ENCODE measurements at regions of chr9 and their contacts with region 1.

Region 1: DNA sequence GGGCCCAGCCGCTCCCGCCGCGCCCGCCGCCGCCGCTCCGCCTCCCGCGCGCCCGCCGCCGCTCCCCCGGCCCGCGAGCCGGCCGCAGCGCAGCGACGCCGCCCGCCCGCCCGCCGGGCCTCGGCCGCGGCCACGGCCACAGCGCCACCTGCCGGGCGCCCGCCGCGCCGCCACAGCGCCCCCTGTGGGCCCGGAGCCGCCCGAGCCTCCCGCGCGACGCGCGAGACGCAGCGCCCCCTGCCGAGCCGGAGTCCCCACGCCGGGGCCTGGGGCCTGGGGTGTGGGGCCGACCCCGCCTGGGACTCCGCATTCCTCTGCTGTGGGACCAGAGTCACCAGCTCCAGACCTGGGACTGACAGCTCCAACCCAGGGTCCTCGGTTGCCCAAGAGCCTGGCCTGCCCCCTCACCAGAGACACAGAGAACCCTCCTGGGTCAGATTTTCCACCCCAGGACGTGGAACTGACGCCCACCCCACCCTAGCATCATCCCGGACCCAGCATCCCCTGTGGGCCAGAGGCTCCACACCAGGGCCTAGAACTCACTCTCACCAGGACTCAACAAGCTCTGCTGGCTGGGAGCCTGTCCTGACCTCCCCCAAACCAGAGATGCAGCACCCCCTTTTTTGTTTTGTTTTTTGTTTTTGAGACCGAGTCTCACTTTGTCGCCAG is at the start of gene RAPGEF1:
- DNase-seq: peak; percentile 90
- ATAC-seq: peak; percentile 93
- H3K4me3 ChIP-seq: peak within 1 kb of the TSS; percentile 70
- H3K27ac ChIP-seq: peak within 1 kb of the TSS; percentile 87
- H3K4me1 ChIP-seq: peaks cover 45% of the 10 kb centered on the region
- H3K27me3 ChIP-seq: no peaks in the 10 kb centered on the region
- CTCF ChIP-seq: peak; percentile 72
- total RNA-seq, gene RAPGEF1: 144 TPM

Region 2: DNA sequence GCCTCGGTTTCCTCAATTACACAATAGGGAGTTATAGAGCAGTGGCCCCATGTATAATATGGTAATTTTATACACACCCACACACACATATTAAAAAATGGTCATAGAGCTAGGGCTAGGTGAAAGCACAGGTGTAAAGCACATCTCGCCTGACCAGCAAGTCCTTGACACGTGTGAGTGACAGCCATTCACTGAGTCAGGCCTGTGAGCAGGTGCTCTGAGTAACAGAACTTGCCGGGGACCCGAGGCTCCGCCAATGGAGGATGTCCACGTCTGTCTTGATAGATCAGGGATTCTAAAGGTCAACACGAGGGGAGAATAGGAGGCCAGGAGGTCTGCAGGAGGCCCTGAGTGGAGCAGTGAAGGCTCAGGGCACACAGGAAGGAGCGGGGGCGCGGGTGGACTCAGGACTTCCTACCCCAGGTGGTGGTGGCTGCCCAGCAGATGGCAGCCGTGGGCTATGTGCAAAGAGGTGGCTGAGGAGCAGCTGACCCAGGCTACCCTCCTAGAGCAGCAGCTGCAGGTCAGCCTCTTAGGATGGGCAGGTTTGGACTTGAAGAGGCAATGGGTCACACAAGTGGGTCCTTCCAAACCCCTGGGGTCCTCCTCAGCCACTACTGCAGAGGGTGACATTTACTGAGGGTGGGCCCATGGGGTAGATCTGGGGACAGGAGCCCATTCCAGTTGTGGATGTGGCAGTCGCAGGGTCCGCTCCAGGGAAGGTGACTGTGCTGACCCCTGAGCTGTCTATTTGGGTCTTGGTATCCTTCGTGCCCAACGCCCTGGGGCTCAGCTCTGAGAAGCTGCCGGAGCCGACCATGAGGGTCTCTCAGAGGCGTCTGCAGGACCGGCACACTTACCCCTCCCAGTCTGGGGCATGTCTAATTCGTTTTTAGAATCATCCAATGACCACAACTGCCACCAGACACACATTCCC is 148.9 kb before region 1 on chr9:
- intact Hi-C with region 1: loop called (anchors 5 kb)
- DNase-seq: peak; percentile 92
- ATAC-seq: peak; percentile 93
- H3K4me3 ChIP-seq: no peak overlapping the region
- H3K27ac ChIP-seq: no peak overlapping the region
- H3K4me1 ChIP-seq: peaks cover 3% of the 10 kb centered on the region
- H3K27me3 ChIP-seq: no peaks in the 10 kb centered on the region
- CTCF ChIP-seq: peak; percentile 79

Region 3: GRCh38 chr9:131663288-131663687 is 76.8 kb before region 1 on chr9:
- intact Hi-C with region 1: no loop called
- DNase-seq: no peak
- ATAC-seq: no peak
- H3K4me3 ChIP-seq: no peak overlapping the region
- H3K27ac ChIP-seq: no peak overlapping the region
- H3K4me1 ChIP-seq: peaks cover 37% of the 10 kb centered on the region
- H3K27me3 ChIP-seq: no peaks in the 10 kb centered on the region
- CTCF ChIP-seq: no peak

Region 4: GRCh38 chr9:131678499-131679111 is 61.5 kb before region 1 on chr9:
- intact Hi-C with region 1: loop called (anchors 10 kb)
- DNase-seq: peak; percentile 77
- ATAC-seq: peak; percentile 96
- H3K4me3 ChIP-seq: no peak overlapping the region
- H3K27ac ChIP-seq: peak overlapping the region; percentile 75
- H3K4me1 ChIP-seq: peaks cover 66% of the 10 kb centered on the region
- H3K27me3 ChIP-seq: no peaks in the 10 kb centered on the region
- CTCF ChIP-seq: no peak